Activated T-helper 1 cell treated with anti-CD3 and anti-CD28 coated beads, Interleukin-12 subunit alpha, Interleukin-12 subunit beta, Interleukin-2, Interleukin-4 antibody, amounts not matched to agents 30 ng/mL and 10 ng/mL and 1 ng/mL, durations not matched to agents 14 hours and 24 hours and 36 hours (primary cell): ENCODE measurements at regions of chr17 and their contacts with region 1.

Region 1: GRCh38 chr17:17972126-17972951 is at the starts of genes DRC3 and TOM1L2:
- DNase-seq: peak; percentile 100
- H3K4me3 Mint-ChIP-seq: peak within 1 kb of the TSS; percentile 94
- H3K27ac Mint-ChIP-seq: peak within 1 kb of the TSS; percentile 89
- H3K4me1 Mint-ChIP-seq: peaks cover 35% of the 10 kb centered on the region
- H3K27me3 Mint-ChIP-seq: peaks cover 2% of the 10 kb centered on the region
- total RNA-seq, gene DRC3: not detected in 2 replicates
- total RNA-seq, gene TOM1L2: 9.3 and 10.2 TPM in 2 replicates

Region 2: GRCh38 chr17:17591355-17592298 is 380.7 kb before region 1 on chr17 and contains the start of gene PEMT:
- intact Hi-C with region 1: loop called (anchors 1 kb)
- DNase-seq: peak; percentile 90
- H3K4me3 Mint-ChIP-seq: peak within 1 kb of the TSS; percentile 98
- H3K27ac Mint-ChIP-seq: peak within 1 kb of the TSS; percentile 94
- H3K4me1 Mint-ChIP-seq: peaks cover 18% of the 10 kb centered on the region
- H3K27me3 Mint-ChIP-seq: no peaks in the 10 kb centered on the region
- total RNA-seq, gene PEMT: 39.9 and 45.1 TPM in 2 replicates

Region 3: GRCh38 chr17:17823433-17824118 is 148.8 kb before region 1 on chr17:
- intact Hi-C with region 1: loop called (anchors 1 kb)
- DNase-seq: peak; percentile 82
- H3K4me3 Mint-ChIP-seq: peak overlapping the region; percentile 80
- H3K27ac Mint-ChIP-seq: peak overlapping the region; percentile 91
- H3K4me1 Mint-ChIP-seq: peaks cover 92% of the 10 kb centered on the region
- H3K27me3 Mint-ChIP-seq: no peaks in the 10 kb centered on the region

Region 4: DNA sequence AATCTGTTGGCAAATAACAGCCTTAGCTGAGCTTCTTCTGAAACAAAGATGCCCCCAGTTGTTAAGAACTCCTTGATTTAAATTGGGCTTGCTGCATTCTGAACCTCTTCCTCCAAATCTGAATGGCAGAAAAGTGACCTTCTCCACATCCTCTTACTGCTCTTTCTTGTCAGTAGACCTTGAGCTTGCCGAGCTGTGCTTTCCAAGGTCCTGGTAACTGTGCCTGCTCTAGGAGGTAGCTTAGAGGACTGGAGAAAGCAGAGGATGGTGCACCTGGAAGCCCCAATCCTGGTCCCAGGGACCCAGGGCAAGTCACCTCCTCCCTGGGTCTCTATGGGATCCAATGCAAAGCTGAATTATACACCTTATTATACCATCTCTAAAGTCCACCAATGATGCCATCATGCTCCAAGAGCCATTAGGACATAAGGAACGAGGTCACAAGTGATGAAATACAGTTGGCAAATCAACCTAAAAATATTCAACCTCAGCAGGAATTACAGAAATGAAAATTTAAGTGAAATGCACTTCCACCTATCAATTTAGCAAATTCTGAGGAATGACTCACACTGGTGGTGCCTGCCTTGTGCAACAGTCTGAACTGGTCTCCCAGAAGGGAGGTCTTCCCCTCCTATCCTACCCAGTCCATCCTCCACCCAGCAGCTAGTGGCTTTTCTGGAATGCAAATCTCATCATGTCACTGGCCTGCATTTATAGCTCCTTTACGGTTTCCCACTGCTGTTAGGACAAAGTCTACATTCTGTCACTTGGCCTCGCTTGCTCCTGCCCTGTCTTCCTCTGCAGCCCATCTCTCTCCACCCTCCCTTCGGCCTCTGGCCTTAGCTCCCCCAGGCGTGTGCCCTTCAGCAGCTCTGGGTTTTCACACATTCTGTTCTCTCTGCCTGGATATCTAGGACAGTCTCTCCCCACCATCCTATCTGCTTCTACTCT is 36.7 kb before region 1 on chr17:
- intact Hi-C with region 1: no loop called
- DNase-seq: no peak
- H3K4me3 Mint-ChIP-seq: no peak overlapping the region
- H3K27ac Mint-ChIP-seq: no peak overlapping the region
- H3K4me1 Mint-ChIP-seq: peaks cover 22% of the 10 kb centered on the region
- H3K27me3 Mint-ChIP-seq: peaks cover 2% of the 10 kb centered on the region

Region 5: GRCh38 chr17:17954079-17954478 is 18.3 kb before region 1 on chr17:
- intact Hi-C with region 1: no loop called
- DNase-seq: no peak
- H3K4me3 Mint-ChIP-seq: no peak overlapping the region
- H3K27ac Mint-ChIP-seq: no peak overlapping the region
- H3K4me1 Mint-ChIP-seq: peaks cover 33% of the 10 kb centered on the region
- H3K27me3 Mint-ChIP-seq: no peaks in the 10 kb centered on the region

Region 6: DNA sequence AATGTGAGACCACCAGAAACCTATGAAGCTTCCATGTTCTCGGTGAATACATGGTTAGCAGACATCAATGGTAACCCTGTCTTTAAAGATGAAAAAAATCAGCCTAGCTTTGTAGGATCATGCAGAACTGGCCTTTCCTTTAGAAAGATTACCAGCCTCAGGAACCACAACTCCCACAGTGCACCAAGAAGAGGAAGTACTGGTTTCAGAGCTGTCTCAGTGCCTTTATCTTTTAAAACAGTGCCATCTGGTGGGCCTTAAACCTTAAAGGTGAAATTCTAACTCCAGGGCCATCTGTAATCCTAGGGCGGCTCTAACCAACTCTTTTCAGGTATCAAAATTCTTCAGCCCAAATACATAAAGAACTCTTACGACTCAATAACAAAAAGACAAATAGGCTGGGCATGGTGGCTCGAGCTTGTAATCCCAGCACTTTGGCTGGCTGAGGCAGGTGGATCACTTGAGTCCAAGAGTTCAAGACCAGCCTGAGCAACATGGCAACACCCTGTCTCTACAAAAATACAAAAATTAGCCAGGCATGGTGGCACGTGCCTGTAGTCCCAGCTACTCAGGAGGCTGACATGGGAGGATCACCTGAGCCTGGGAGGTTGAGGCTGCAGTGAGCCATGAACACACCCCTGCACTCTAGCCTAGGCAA is 61.2 kb after region 1 on chr17:
- intact Hi-C with region 1: loop called (anchors 1 kb)
- DNase-seq: peak; percentile 57
- H3K4me3 Mint-ChIP-seq: no peak overlapping the region
- H3K27ac Mint-ChIP-seq: peak overlapping the region; percentile 21
- H3K4me1 Mint-ChIP-seq: peaks cover 38% of the 10 kb centered on the region
- H3K27me3 Mint-ChIP-seq: no peaks in the 10 kb centered on the region

Region 7: GRCh38 chr17:18079595-18079994 is 107.3 kb after region 1 on chr17:
- intact Hi-C with region 1: no loop called
- DNase-seq: no peak
- H3K4me3 Mint-ChIP-seq: no peak overlapping the region
- H3K27ac Mint-ChIP-seq: no peak overlapping the region
- H3K4me1 Mint-ChIP-seq: no peaks in the 10 kb centered on the region
- H3K27me3 Mint-ChIP-seq: peaks cover 8% of the 10 kb centered on the region

Region 8: DNA sequence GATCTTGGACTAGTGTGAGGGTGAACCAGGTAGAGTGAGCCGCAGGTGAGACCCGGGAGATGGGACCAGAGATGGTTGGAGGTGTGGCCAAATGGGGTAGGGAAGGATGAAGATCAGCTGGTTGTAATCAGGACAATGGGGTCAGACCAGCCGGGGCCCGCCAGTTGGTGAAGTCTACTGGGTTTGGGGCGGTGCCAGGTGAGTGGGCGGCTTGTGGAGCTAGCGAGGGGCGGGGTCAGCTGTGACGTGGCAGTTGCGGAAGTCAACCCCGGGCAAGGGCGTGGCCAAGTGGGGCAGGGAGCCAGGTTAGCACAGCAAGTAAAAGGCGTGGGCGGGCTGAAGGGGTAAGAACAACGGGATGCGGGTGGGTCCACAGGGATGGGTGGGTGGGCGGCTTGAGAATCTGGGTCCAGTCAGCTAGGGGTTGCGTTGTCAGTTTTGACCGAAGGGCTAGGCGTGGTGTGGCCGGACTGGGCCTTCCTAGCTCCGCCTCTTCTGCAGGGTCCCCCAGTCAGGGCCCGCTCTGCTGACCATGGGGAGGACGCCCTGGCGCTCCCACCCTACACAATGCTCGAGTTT is 185.8 kb after region 1 on chr17:
- intact Hi-C with region 1: loop called (anchors 1 kb)
- DNase-seq: peak; percentile 87
- H3K4me3 Mint-ChIP-seq: peak overlapping the region; percentile 77
- H3K27ac Mint-ChIP-seq: peak overlapping the region; percentile 79
- H3K4me1 Mint-ChIP-seq: peaks cover 4% of the 10 kb centered on the region
- H3K27me3 Mint-ChIP-seq: no peaks in the 10 kb centered on the region

Region 9: DNA sequence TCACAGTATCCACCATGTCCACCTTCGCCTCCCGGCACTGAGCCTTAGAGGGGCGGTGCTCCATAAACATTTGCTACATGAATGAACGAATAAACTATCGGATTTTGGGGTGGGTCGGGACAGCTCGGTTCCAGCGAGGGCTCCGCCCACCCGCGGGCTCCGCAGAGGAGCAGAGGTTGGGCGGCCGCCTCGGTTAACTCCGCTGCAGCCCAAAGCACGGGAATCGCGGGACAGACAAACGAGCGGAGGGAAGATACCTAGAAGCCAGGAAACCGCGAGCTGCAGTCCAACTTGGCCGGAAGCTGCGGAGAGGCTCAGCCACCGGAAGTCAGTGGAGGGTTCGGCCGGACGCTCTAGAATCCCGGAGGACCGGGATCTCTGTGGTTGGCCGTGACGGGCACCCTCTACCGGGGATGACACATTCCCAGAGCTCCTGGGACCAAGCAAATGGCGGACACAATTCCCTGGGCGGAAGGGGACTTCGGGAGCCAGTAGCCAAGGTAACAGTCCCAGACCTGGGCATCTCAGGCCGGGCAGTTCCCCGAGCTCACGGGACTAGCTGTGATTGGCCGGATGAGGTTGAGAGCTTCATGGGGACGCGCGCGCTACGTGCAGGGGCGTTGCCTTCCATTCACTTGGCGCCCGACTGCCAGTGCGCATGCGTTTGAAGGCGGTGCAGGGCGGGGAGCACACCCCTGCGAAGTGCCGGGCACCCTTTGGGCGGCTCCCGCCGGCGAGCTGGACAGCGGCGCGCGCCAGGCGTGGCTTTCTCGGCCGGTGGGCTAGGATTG is 1405.5 kb after region 1 on chr17:
- intact Hi-C with region 1: loop called (anchors 2 kb)
- DNase-seq: peak; percentile 98
- H3K4me3 Mint-ChIP-seq: peak overlapping the region; percentile 98
- H3K27ac Mint-ChIP-seq: peak overlapping the region; percentile 99
- H3K4me1 Mint-ChIP-seq: peaks cover 36% of the 10 kb centered on the region
- H3K27me3 Mint-ChIP-seq: no peaks in the 10 kb centered on the region